ENCODE measurements at regions of chr5 and their contacts with region 1.

Region 1: DNA sequence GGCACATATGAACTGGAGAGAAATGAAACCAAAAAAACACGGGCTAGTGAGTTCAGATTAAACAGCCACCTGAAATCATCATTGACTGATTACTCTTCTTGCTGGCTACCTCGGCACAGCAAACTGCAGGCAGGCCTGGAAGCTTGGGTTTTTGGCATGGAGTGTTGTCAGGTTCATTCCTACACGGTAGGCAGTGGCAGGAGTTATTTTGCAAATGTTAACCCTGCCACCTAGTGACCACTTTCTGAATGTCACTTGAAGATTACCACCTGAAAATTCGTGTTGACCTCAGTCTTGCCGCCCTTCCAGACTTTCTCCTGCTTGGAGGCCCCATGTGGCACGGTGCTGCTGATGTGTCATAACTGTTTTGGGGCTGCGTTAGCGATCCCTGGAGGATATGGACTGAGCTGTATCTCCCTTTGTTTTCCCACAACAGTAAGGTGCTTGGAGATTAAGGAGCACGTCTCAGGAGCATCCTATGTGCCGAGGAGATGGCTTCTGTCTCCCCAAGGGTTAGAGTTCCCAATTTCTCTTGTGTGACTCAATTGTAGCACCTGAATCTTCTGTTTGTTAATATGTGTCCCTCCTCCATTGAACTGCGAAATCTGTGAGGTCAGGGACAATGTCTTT is 12.7 kb upstream of the CD180 start:
- DNase-seq: peak in 4 of 5 donors; percentile 52 to 68 (median 56)
- ATAC-seq: peak; percentile 55 to 87 (median 84)
- H3K4me3 ChIP-seq: no peak overlapping the region
- H3K27ac ChIP-seq: peak overlapping the region in 1 of 12 donors; percentile 18
- H3K4me1 ChIP-seq: peaks cover 0 to 47% (median 3%) of the 10 kb centered on the region in 12 donors
- H3K27me3 ChIP-seq: no peaks in the 10 kb centered on the region
- CTCF ChIP-seq: peak; percentile 66 to 84 (median 82)
- POLR2A ChIP-seq: no peak

Region 2: DNA sequence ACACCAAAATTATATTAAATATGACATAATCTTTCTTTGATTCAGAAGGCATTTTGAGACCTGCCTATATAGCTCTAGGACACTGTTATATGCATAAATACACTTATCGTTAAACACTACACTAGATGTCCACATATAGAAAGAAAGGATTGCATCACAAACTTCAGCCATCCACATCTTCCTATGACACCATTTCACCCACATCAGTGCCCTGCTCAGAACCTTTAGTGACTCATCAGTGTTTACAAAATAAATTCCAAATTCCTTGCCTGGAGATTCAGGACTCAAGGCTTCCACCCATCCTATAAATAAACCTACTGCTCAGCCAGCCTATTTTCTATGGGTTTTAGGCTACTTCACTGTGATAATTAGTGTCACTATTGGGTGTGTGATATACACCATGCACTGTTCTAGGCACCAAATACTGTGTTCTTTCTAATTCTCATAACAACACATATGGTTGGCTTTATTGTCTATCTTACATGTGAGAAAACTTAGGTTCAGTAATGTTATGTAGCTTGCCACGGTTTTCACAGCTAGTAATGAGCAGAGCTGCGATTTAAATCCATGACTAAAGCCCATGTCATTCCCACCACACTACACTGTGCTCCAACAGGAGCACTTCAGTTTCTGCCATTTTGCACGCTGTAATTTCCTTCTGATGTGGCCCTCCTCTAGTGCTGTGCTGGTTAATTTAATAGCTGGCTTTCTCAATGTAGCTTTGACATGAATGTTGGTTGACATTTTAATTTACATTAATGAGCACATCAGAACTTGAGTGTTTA is 961.9 kb before region 1 on chr5:
- intact Hi-C with region 1: loop called in 1 of 10 experiments (anchors 10 kb)
- DNase-seq: no peak
- ATAC-seq: no peak
- H3K4me3 ChIP-seq: no peak overlapping the region
- H3K27ac ChIP-seq: no peak overlapping the region
- H3K4me1 ChIP-seq: no peaks in the 10 kb centered on the region
- H3K27me3 ChIP-seq: no peaks in the 10 kb centered on the region
- CTCF ChIP-seq: no peak
- POLR2A ChIP-seq: no peak

Region 3: GRCh38 chr5:66814146-66814991 is 394.9 kb before region 1 on chr5:
- intact Hi-C with region 1: loop called (anchors 2 to 10 kb)
- DNase-seq: no peak
- ATAC-seq: peak in 2 of 4 donors; percentile 24 to 26
- H3K4me3 ChIP-seq: no peak overlapping the region
- H3K27ac ChIP-seq: no peak overlapping the region
- H3K4me1 ChIP-seq: peaks cover 0 to 23% (median 4%) of the 10 kb centered on the region in 12 donors
- H3K27me3 ChIP-seq: no peaks in the 10 kb centered on the region
- CTCF ChIP-seq: peak; percentile 54 to 82 (median 74)
- POLR2A ChIP-seq: no peak

Region 4: GRCh38 chr5:67156976-67157583 is 52.2 kb before region 1 on chr5:
- intact Hi-C with region 1: loop called in 4 of 10 experiments (anchors 2 kb)
- DNase-seq: no peak
- ATAC-seq: no peak
- H3K4me3 ChIP-seq: no peak overlapping the region
- H3K27ac ChIP-seq: no peak overlapping the region
- H3K4me1 ChIP-seq: peaks cover 0 to 23% (median 8%) of the 10 kb centered on the region in 12 donors
- H3K27me3 ChIP-seq: no peaks in the 10 kb centered on the region
- CTCF ChIP-seq: peak; percentile 55 to 87 (median 71)
- POLR2A ChIP-seq: no peak